Activated CD4-positive, alpha-beta memory T cell treated with anti-CD3 and anti-CD28 coated beads, Interleukin-2, amount 10 ng/mL, durations not matched to agents 7 days and 5 days (primary cell): ENCODE measurements at regions of chr20 and their contacts with region 1.

Region 1: GRCh38 chr20:297098-297924 is at the start of gene ZCCHC3:
- DNase-seq: peak; percentile 86
- H3K4me3 Mint-ChIP-seq: peak within 1 kb of the TSS; percentile 96
- H3K27ac Mint-ChIP-seq: peak within 1 kb of the TSS; percentile 98
- H3K4me1 Mint-ChIP-seq: peaks cover 44% of the 10 kb centered on the region
- H3K27me3 Mint-ChIP-seq: no peaks in the 10 kb centered on the region
- total RNA-seq, gene ZCCHC3: 23.5 to 23.9 TPM

Region 2: GRCh38 chr20:309841-310644 is 12.7 kb after region 1 on chr20:
- CTCF ChIA-PET with region 1: interaction called, 3 read pairs
- POLR2A ChIA-PET with region 1: interaction called, 15 read pairs
- DNase-seq: peak; percentile 76
- H3K4me3 Mint-ChIP-seq: no peak overlapping the region
- H3K27ac Mint-ChIP-seq: no peak overlapping the region
- H3K4me1 Mint-ChIP-seq: peaks cover 13% of the 10 kb centered on the region
- H3K27me3 Mint-ChIP-seq: peaks cover 2% of the 10 kb centered on the region

Region 3: GRCh38 chr20:324177-325044 is 27.1 kb after region 1 on chr20:
- CTCF ChIA-PET with region 1: interaction called, 17 read pairs
- POLR2A ChIA-PET with region 1: interaction called, 95 read pairs
- DNase-seq: peak; percentile 88
- H3K4me3 Mint-ChIP-seq: peak overlapping the region; percentile 87
- H3K27ac Mint-ChIP-seq: peak overlapping the region; percentile 81
- H3K4me1 Mint-ChIP-seq: peaks cover 27% of the 10 kb centered on the region
- H3K27me3 Mint-ChIP-seq: peaks cover 2% of the 10 kb centered on the region